GM12878 (cell line): ENCODE measurements at regions of chr6 and their contacts with region 1.

Region 1: GRCh38 chr6:88650029-88650619 is 313.3 kb downstream of the RNGTT start:
- DNase-seq: peak; percentile 97
- ATAC-seq: peak; percentile 94
- H3K4me3 ChIP-seq: no peak overlapping the region
- H3K27ac ChIP-seq: peak overlapping the region; percentile 83
- H3K4me1 ChIP-seq: peaks cover 11% of the 10 kb centered on the region
- H3K27me3 ChIP-seq: no peaks in the 10 kb centered on the region
- CTCF ChIP-seq: no peak
- EP300 ChIP-seq: peak in 1 of 2 experiments; percentile 94
- POLR2A ChIP-seq: no peak
- RAD21 ChIP-seq: peak; percentile 41

Region 2: GRCh38 chr6:88616380-88616779 is 33.7 kb before region 1 on chr6:
- CTCF ChIA-PET with region 1: no interaction called
- POLR2A ChIA-PET with region 1: no interaction called
- RAD21 ChIA-PET with region 1: interaction called, 6 read pairs
- SMC1A ChIA-PET with region 1: interaction called, 5 read pairs
- in situ Hi-C with region 1: no loop called
- intact Hi-C with region 1: loop called (anchors 1 kb)
- DNase-seq: no peak
- ATAC-seq: peak; percentile 78
- H3K4me3 ChIP-seq: peak overlapping the region; percentile 9; the same call in 1 of the 2 replicates
- H3K27ac ChIP-seq: peak overlapping the region; percentile 62
- H3K4me1 ChIP-seq: peaks cover 15% of the 10 kb centered on the region; the same call in 1 of the 2 replicates
- H3K27me3 ChIP-seq: no peaks in the 10 kb centered on the region
- CTCF ChIP-seq: no peak
- EP300 ChIP-seq: peak; percentile 44 to 90; a peak in 3 of 4 replicates
- POLR2A ChIP-seq: no peak
- RAD21 ChIP-seq: no peak

Region 3: GRCh38 chr6:88629838-88630494 is 20.2 kb before region 1 on chr6:
- CTCF ChIA-PET with region 1: interaction called, 3 read pairs
- POLR2A ChIA-PET with region 1: interaction called, 3 read pairs
- RAD21 ChIA-PET with region 1: interaction called, 9 read pairs
- SMC1A ChIA-PET with region 1: interaction called, 11 read pairs
- in situ Hi-C with region 1: no loop called
- intact Hi-C with region 1: no loop called
- DNase-seq: no peak
- ATAC-seq: peak; percentile 84
- H3K4me3 ChIP-seq: no peak overlapping the region
- H3K27ac ChIP-seq: no peak overlapping the region; the same call in 1 of the 2 replicates
- H3K4me1 ChIP-seq: peaks cover 7% of the 10 kb centered on the region; the same call in 1 of the 2 replicates
- H3K27me3 ChIP-seq: no peaks in the 10 kb centered on the region
- CTCF ChIP-seq: peak; percentile 14 to 28 (median 23); a peak in 3 of 6 replicates
- EP300 ChIP-seq: no peak
- POLR2A ChIP-seq: no peak
- RAD21 ChIP-seq: peak; percentile 39; the same call in 1 of the 2 replicates

Region 4: DNA sequence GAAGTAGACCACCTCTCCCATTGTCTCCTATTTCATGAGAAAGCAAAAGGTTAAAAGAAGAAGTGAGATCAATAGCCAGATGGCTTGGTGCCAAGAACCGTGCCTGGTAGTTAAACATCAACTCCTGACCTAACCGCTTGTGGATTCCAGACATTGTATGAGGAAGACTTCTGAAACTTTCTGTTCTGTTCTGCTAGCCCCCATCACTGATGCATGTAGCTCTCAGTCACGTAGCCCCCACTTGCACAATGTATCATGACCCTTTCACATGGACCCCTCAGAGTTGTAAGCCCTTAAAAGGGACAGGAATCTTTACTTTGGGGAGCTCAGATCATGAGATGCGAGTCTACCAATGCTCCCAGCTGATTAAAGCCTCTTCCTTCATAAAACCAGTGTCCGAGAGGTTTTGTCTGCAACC is 12.0 kb after region 1 on chr6:
- CTCF ChIA-PET with region 1: interaction called, 4 read pairs
- POLR2A ChIA-PET with region 1: interaction called, 4 read pairs
- RAD21 ChIA-PET with region 1: interaction called, 3 read pairs
- SMC1A ChIA-PET with region 1: interaction called, 11 read pairs
- in situ Hi-C with region 1: no loop called
- intact Hi-C with region 1: loop called (anchors 1 kb)
- DNase-seq: peak; percentile 89
- ATAC-seq: peak; percentile 88
- H3K4me3 ChIP-seq: no peak overlapping the region
- H3K27ac ChIP-seq: peak overlapping the region; percentile 39
- H3K4me1 ChIP-seq: peaks cover 17% of the 10 kb centered on the region
- H3K27me3 ChIP-seq: no peaks in the 10 kb centered on the region
- CTCF ChIP-seq: no peak
- EP300 ChIP-seq: peak in 1 of 2 experiments; percentile 69; a peak in 2 of 4 replicates
- POLR2A ChIP-seq: no peak
- RAD21 ChIP-seq: no peak

Region 5: DNA sequence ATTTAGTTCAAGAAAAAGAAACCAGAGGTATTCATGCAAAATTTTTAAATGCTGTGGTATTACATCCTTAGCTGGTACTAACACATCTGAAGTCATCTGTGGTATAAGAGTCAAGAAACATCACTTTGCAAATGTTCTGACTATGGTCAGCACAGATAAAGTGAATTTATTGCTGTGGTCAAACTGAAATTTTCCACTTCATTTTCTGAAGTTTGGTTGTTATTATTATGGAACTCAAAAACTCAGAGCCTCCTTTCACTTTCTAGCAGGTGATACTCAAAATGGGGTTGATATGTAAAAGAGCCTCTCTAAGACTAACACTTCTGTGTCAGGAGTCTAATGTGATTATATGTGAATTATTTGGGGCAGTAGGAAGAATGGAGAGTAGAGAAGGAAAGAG is 55.5 kb after region 1 on chr6:
- CTCF ChIA-PET with region 1: interaction called, 4 read pairs
- POLR2A ChIA-PET with region 1: interaction called, 3 read pairs
- RAD21 ChIA-PET with region 1: interaction called, 12 read pairs
- SMC1A ChIA-PET with region 1: interaction called, 15 read pairs
- in situ Hi-C with region 1: no loop called
- intact Hi-C with region 1: loop called (anchors 1 kb)
- DNase-seq: peak; percentile 81
- ATAC-seq: peak; percentile 96
- H3K4me3 ChIP-seq: no peak overlapping the region
- H3K27ac ChIP-seq: peak overlapping the region; percentile 53; the same call in 1 of the 2 replicates
- H3K4me1 ChIP-seq: peaks cover 22% of the 10 kb centered on the region; the same call in 1 of the 2 replicates
- H3K27me3 ChIP-seq: no peaks in the 10 kb centered on the region
- CTCF ChIP-seq: no peak
- EP300 ChIP-seq: peak; percentile 78 to 85
- POLR2A ChIP-seq: no peak
- RAD21 ChIP-seq: 0 out of 2 replicates have a peak, but pooled peaks have one; percentile 2

Region 6: DNA sequence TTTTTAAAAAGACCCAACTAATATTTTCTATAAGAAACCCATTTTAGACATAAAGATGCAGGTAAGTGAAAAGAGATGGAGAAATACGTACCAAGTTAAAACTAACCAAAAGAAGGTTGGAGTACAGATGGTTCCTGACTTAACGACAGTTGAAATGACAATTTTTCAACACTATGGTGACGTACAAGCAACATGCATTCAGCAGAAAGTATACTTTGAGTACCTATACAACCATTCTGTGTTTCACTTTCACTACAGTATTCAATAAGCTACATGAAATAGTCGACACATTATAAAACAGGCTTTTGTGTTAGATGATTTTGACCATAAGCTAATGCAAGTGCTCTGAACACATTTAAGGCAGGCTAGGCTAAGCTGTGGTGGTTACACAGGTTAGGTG is 84.4 kb after region 1 on chr6:
- CTCF ChIA-PET with region 1: no interaction called
- POLR2A ChIA-PET with region 1: no interaction called
- RAD21 ChIA-PET with region 1: no interaction called
- SMC1A ChIA-PET with region 1: no interaction called
- in situ Hi-C with region 1: no loop called
- intact Hi-C with region 1: no loop called
- DNase-seq: no peak
- ATAC-seq: no peak
- H3K4me3 ChIP-seq: no peak overlapping the region
- H3K27ac ChIP-seq: peak overlapping the region; percentile 3; the same call in 1 of the 2 replicates
- H3K4me1 ChIP-seq: no peaks in the 10 kb centered on the region; the same call in 1 of the 2 replicates
- H3K27me3 ChIP-seq: no peaks in the 10 kb centered on the region
- CTCF ChIP-seq: no peak
- EP300 ChIP-seq: no peak
- POLR2A ChIP-seq: no peak
- RAD21 ChIP-seq: no peak